PC-3 (cell line): ENCODE measurements at regions of chr10 and their contacts with region 1.

Region 1: DNA sequence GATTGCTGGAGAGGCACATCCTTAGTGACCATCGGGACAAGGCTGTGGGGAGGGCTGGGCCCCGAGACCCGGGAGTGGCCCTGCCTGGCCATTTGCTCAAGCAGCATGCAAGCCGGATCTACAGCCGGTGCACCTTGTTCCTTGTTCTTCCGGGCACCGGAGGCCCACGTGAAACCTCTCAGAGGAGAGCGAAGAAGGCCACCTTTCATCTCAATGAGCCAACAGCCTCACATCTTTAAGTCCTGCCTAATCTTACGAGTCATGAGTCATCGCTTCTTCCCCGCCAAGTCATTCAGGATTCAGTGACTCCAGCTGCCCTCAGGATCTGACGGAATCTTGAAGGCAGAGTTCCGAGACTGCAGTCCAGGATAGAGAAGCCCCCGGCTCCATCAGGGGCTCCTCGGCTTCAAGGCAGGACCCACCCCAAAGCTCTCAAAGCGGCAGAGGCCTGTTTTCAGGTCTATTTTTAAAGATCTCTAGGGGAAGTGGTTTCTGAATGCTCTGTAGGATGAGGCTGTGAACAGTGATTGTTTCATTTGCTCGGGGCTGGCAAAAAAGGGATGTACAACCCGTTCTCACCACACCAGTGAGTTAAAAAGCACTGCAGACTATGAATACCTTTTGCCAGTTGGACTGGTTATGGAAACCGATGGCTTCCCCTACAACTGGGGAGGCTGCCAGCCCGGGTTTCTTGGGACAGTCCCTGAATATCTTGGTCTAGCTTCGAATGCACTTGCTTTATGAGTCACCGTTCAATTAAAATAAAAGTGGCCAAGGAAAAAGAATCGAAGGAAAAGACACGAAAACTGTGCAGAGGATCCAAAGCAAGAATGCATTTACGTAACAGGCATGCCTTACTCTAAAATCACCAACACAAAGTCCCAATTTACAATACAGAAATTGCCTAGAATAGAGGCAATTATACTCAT is 57.2 kb upstream of the ECHDC3 start:
- DNase-seq: peak; percentile 86
- ATAC-seq: peak; percentile 80
- H3K4me3 ChIP-seq: peak overlapping the region; percentile 63
- H3K27ac ChIP-seq: peak overlapping the region; percentile 100
- H3K4me1 ChIP-seq: peaks cover 49% of the 10 kb centered on the region
- H3K27me3 ChIP-seq: no peaks in the 10 kb centered on the region
- CTCF ChIP-seq: no peak

Region 2: GRCh38 chr10:11533328-11533781 is 151.6 kb before region 1 on chr10:
- CTCF ChIA-PET with region 1: no interaction called
- POLR2A ChIA-PET with region 1: interaction called, 13 read pairs
- intact Hi-C with region 1: no loop called
- DNase-seq: no peak
- ATAC-seq: no peak
- H3K4me3 ChIP-seq: no peak overlapping the region
- H3K27ac ChIP-seq: no peak overlapping the region
- H3K4me1 ChIP-seq: no peaks in the 10 kb centered on the region
- H3K27me3 ChIP-seq: no peaks in the 10 kb centered on the region
- CTCF ChIP-seq: no peak

Region 3: GRCh38 chr10:11611248-11612020 is 73.5 kb before region 1 on chr10 and contains the start of gene USP6NL:
- CTCF ChIA-PET with region 1: interaction called, 3 read pairs
- POLR2A ChIA-PET with region 1: no interaction called
- intact Hi-C with region 1: loop called (anchors 2 kb)
- DNase-seq: peak; percentile 74
- ATAC-seq: peak; percentile 89
- H3K4me3 ChIP-seq: peak within 1 kb of the TSS; percentile 75
- H3K27ac ChIP-seq: peak within 1 kb of the TSS; percentile 34; the same call in 1 of the 2 replicates
- H3K4me1 ChIP-seq: peaks cover 14% of the 10 kb centered on the region; the same call in 1 of the 2 replicates
- H3K27me3 ChIP-seq: no peaks in the 10 kb centered on the region
- CTCF ChIP-seq: no peak
- total RNA-seq, gene USP6NL: 13.0 and 14.3 TPM in 2 replicates

Region 4: DNA sequence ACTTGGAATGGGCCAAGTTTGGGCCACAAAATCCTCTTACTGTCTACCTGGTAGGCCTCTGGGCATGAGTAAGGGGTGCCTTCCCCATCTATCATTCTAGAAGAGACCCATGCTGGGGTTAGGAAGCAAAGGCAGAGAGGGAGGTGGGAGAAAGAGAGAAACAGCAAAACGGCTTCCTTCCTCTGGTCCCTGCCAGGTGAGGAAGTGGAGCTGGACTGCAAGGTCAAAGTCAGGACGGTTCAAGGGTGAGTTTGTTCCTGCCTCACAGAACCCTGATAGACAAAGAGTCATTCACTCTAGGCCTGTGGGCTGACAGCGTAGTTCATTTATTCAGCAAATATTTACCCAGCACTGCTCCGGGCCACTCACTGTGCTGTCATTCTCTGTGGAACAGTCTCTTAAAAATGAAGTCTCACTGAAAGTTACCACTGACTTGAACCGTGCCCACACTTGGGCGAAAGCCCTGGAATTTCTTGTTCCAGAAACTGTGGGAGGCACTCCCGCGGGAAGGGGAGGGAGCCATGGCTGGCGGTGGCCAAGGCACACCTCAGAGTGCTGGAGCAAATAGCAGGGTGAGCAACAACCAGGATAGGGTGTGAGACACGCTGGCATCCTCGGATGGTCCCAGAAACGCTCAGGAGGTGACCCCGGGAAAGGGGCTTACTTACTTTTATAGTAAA is 31.0 kb after region 1 on chr10:
- CTCF ChIA-PET with region 1: no interaction called
- POLR2A ChIA-PET with region 1: interaction called, 3 read pairs
- intact Hi-C with region 1: loop called (anchors 1 kb)
- DNase-seq: peak; percentile 90
- ATAC-seq: peak; percentile 94
- H3K4me3 ChIP-seq: 0 out of 2 replicates have a peak overlapping the region, but pooled peaks have one; percentile 18
- H3K27ac ChIP-seq: peak overlapping the region; percentile 100
- H3K4me1 ChIP-seq: peaks cover 28% of the 10 kb centered on the region
- H3K27me3 ChIP-seq: no peaks in the 10 kb centered on the region
- CTCF ChIP-seq: no peak

Region 5: DNA sequence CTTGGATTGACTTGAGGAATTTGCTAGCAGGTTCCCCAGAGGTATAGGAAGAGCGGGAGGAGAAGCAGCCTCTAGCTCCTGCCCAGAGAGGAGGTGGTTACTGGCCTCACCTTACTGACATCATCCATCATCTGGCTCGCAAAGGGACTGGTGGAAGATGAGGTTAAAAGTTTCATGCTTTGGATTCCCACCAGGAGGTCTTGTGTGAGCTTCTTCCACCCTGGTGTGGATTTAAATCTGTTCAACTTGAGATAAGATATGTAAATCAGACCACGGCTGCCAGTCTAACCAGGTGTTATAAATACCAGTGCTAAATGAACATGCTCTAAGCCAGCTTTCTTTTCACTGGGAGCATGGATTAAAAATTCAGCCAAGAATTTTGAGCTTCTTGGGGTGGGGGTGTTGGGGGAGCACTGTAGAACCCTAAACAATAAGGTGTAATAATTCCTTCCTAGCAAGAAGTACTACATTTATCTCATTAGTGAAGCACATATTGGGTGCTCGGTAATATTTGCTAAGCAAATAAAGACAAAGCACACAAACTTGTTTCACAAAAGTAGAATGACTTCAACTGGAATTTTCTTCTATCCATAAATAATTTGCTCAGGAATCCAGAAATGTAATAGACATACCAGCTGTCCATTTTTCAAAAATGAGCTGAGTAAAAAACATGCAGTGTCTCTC is 146.0 kb after region 1 on chr10:
- CTCF ChIA-PET with region 1: no interaction called
- POLR2A ChIA-PET with region 1: no interaction called
- intact Hi-C with region 1: no loop called
- DNase-seq: peak; percentile 7
- ATAC-seq: peak; percentile 51
- H3K4me3 ChIP-seq: no peak overlapping the region
- H3K27ac ChIP-seq: peak overlapping the region; percentile 25; the same call in 1 of the 2 replicates
- H3K4me1 ChIP-seq: peaks cover 26% of the 10 kb centered on the region
- H3K27me3 ChIP-seq: no peaks in the 10 kb centered on the region
- CTCF ChIP-seq: no peak